ENCODE measurements at regions of chr2 and their contacts with region 1.

Region 1: DNA sequence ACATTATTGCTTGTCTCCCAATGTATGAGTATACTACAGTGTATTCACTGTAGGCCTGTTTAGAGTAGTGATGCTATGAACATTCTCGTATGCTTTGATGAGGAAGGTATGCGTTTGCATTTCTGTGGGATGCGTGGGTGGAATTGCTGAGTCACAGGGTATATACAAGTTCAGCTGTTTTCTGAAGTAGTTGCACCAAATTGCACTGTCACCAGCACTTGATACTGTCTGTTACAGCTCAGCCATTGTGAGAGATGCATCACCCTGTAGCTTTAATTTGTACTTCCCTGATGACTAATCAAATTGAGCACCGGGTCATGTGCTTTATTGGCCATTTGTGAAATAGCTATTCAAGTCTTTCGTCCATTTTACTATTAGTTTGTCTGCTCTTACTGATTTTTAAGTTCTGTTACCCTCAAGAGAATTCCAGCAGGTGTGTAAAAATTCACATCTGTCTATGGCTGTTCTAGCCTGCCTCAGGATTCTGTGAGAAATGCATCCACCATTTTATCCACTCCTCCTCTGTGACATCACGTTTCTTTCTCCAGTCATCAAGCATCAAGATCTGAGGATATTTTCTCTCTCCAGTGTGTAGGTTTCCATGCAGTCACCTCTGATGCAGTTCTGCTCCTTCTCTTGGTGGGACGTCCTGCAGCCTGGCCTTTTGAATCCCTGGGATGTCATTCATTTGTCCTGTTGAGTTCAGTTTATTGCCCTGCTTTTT is 72.5 kb downstream of the DGKD start:
- DNase-seq: peak; percentile 78
- H3K4me3 Mint-ChIP-seq: no peak overlapping the region
- H3K27ac Mint-ChIP-seq: peak overlapping the region; percentile 39
- H3K4me1 Mint-ChIP-seq: peaks cover 44% of the 10 kb centered on the region
- H3K27me3 Mint-ChIP-seq: no peaks in the 10 kb centered on the region
- CTCF ChIP-seq: no peak

Region 2: GRCh38 chr2:233404222-233404621 is 22.6 kb before region 1 on chr2:
- CTCF ChIA-PET with region 1: interaction called, 10 read pairs
- POLR2A ChIA-PET with region 1: interaction called, 4 read pairs
- intact Hi-C with region 1: no loop called
- DNase-seq: peak; percentile 76
- H3K4me3 Mint-ChIP-seq: no peak overlapping the region
- H3K27ac Mint-ChIP-seq: no peak overlapping the region
- H3K4me1 Mint-ChIP-seq: peaks cover 5% of the 10 kb centered on the region
- H3K27me3 Mint-ChIP-seq: no peaks in the 10 kb centered on the region
- CTCF ChIP-seq: peak; percentile 75

Region 3: GRCh38 chr2:233413559-233414272 is 13.1 kb before region 1 on chr2:
- CTCF ChIA-PET with region 1: interaction called, 7 read pairs
- POLR2A ChIA-PET with region 1: interaction called, 80 read pairs
- intact Hi-C with region 1: loop called (anchors 2 kb)
- DNase-seq: peak; percentile 93
- H3K4me3 Mint-ChIP-seq: peak overlapping the region; percentile 60
- H3K27ac Mint-ChIP-seq: peak overlapping the region; percentile 91
- H3K4me1 Mint-ChIP-seq: peaks cover 35% of the 10 kb centered on the region
- H3K27me3 Mint-ChIP-seq: no peaks in the 10 kb centered on the region
- CTCF ChIP-seq: no peak

Measured in MCF 10A (cell line).